Activated CD4-positive, alpha-beta memory T cell treated with anti-CD3 and anti-CD28 coated beads, Interleukin-2, amount 10 ng/mL, durations not matched to agents 7 days and 5 days (primary cell): ENCODE measurements at regions of chr9 and their contacts with region 1.

Region 1: GRCh38 chr9:20622330-20623020 is at the start of gene MLLT3:
- DNase-seq: peak; percentile 97
- H3K4me3 Mint-ChIP-seq: peak within 1 kb of the TSS; percentile 91
- H3K27ac Mint-ChIP-seq: peak within 1 kb of the TSS; percentile 92
- H3K4me1 Mint-ChIP-seq: peaks cover 37% of the 10 kb centered on the region
- H3K27me3 Mint-ChIP-seq: no peaks in the 10 kb centered on the region
- total RNA-seq, gene MLLT3: 53.4 to 57.5 TPM

Region 2: GRCh38 chr9:20209391-20210340 is 412.8 kb before region 1 on chr9:
- CTCF ChIA-PET with region 1: interaction called, 5 read pairs
- POLR2A ChIA-PET with region 1: interaction called, 12 read pairs
- DNase-seq: peak; percentile 73
- H3K4me3 Mint-ChIP-seq: peak overlapping the region; percentile 4
- H3K27ac Mint-ChIP-seq: peak overlapping the region; percentile 92
- H3K4me1 Mint-ChIP-seq: peaks cover 45% of the 10 kb centered on the region
- H3K27me3 Mint-ChIP-seq: no peaks in the 10 kb centered on the region

Region 3: DNA sequence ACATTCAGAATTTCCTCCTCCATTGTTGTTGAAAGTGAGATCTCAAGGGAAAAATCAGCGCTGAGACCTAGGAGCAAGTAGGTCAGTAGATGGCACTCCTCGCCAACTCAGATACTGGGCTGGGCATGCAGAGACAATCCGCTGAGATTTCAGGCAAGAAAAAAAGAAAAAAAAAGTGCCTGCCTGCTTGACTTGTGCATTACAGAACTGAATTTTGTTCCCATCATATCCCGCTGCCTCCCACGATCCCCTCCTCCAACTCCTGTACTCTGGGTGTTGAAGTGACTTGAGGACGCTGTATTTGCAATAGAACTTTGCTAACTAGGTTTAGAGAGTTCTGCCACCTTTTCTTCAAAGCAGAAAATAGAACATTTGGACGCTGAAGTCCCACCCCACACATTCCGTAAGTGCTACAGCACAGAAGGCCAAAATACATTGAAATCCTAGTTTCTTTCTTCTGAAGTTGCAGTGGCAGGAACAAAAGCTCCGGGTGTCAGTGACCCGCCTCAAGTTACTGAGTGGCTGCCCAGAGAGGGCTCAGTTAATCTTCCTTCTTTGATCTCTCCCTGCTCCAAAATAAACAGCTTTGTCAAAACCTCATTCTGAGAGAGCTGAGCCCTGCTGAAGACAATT is 266.0 kb before region 1 on chr9:
- CTCF ChIA-PET with region 1: interaction called, 6 read pairs
- POLR2A ChIA-PET with region 1: interaction called, 19 read pairs
- DNase-seq: peak; percentile 51
- H3K4me3 Mint-ChIP-seq: no peak overlapping the region
- H3K27ac Mint-ChIP-seq: no peak overlapping the region
- H3K4me1 Mint-ChIP-seq: peaks cover 65% of the 10 kb centered on the region
- H3K27me3 Mint-ChIP-seq: no peaks in the 10 kb centered on the region

Region 4: GRCh38 chr9:20552874-20553575 is 69.5 kb before region 1 on chr9:
- CTCF ChIA-PET with region 1: interaction called, 16 read pairs
- POLR2A ChIA-PET with region 1: interaction called, 39 read pairs
- DNase-seq: no peak
- H3K4me3 Mint-ChIP-seq: peak overlapping the region; percentile 50
- H3K27ac Mint-ChIP-seq: peak overlapping the region; percentile 81
- H3K4me1 Mint-ChIP-seq: peaks cover 57% of the 10 kb centered on the region
- H3K27me3 Mint-ChIP-seq: no peaks in the 10 kb centered on the region

Region 5: DNA sequence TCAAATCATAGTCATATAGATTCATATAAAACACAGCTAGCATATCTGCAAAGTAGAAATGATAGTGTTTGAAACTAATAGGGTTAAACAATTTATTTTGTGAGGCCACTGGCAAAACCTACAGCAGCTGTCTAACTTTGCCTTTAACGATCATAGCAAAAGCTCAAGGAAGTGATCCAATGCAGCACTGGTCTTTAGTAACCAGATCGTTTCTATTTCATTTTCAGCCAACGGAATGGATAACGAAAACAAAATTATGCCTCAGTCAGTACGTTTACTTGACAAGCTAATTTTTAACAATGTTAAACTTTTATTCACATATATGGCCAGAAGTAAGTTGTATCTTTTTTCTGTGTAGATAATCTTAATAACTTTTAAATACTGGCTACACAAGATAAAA is 17.9 kb before region 1 on chr9:
- CTCF ChIA-PET with region 1: interaction called, 16 read pairs
- POLR2A ChIA-PET with region 1: interaction called, 27 read pairs
- DNase-seq: no peak
- H3K4me3 Mint-ChIP-seq: peak overlapping the region; percentile 25
- H3K27ac Mint-ChIP-seq: no peak overlapping the region
- H3K4me1 Mint-ChIP-seq: peaks cover 54% of the 10 kb centered on the region
- H3K27me3 Mint-ChIP-seq: no peaks in the 10 kb centered on the region

Region 6: DNA sequence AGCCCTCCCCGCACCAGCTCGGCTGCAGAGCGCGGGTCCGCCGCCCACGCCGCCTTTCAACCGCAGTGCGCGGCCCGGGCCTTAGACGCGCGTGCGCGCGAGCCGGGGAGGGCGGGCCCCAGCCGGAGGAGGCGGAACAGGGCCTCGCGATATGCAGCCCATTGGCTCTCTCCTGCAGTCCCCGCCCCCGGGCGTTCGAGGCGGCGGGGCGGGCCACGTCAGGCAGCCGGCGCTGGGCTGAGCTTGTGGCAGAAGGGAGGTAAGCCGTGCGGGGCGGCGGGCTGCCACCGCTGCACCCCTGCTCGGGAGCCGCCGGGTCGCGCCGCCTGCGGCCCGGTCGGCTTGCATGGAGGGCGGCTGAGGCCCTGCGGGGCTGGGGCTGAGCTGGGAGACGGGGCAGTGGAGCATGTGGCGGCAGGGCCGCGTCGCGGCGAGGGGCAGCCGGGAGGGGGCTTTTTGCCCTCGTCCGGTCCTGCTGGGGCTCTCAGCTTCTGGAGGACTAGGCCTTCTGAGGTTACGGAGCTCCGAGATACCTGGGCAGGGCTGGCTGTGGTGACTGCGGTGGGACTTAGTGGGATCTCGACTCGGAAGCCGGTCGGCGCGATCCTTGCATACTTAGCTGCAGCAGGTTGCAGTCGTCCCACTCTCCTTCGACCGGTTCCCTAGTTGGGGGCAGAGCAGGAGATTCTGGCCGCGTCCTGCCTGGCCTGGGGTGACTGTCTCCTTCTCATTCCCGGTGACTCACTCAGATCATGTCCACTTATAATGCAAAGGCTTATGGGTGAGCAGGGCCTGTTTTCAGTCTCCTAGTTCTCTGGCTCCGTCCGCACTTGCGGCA is 61.8 kb after region 1 on chr9 and contains the start of gene FOCAD:
- CTCF ChIA-PET with region 1: interaction called, 16 read pairs
- POLR2A ChIA-PET with region 1: interaction called, 92 read pairs
- DNase-seq: peak; percentile 96
- H3K4me3 Mint-ChIP-seq: peak within 1 kb of the TSS; percentile 91
- H3K27ac Mint-ChIP-seq: peak within 1 kb of the TSS; percentile 73
- H3K4me1 Mint-ChIP-seq: peaks cover 20% of the 10 kb centered on the region
- H3K27me3 Mint-ChIP-seq: no peaks in the 10 kb centered on the region
- total RNA-seq, gene FOCAD: 26.3 to 30.7 TPM

Region 7: GRCh38 chr9:21031091-21031807 is 408.8 kb after region 1 on chr9 and contains the start of gene HACD4:
- CTCF ChIA-PET with region 1: no interaction called
- POLR2A ChIA-PET with region 1: interaction called, 19 read pairs
- DNase-seq: peak; percentile 79
- H3K4me3 Mint-ChIP-seq: peak within 1 kb of the TSS; percentile 47
- H3K27ac Mint-ChIP-seq: peak within 1 kb of the TSS; percentile 78
- H3K4me1 Mint-ChIP-seq: peaks cover 25% of the 10 kb centered on the region
- H3K27me3 Mint-ChIP-seq: no peaks in the 10 kb centered on the region
- total RNA-seq, gene HACD4: 14.8 to 15.6 TPM